ENCODE measurements at regions of chr2 and their contacts with region 1.

Region 1: DNA sequence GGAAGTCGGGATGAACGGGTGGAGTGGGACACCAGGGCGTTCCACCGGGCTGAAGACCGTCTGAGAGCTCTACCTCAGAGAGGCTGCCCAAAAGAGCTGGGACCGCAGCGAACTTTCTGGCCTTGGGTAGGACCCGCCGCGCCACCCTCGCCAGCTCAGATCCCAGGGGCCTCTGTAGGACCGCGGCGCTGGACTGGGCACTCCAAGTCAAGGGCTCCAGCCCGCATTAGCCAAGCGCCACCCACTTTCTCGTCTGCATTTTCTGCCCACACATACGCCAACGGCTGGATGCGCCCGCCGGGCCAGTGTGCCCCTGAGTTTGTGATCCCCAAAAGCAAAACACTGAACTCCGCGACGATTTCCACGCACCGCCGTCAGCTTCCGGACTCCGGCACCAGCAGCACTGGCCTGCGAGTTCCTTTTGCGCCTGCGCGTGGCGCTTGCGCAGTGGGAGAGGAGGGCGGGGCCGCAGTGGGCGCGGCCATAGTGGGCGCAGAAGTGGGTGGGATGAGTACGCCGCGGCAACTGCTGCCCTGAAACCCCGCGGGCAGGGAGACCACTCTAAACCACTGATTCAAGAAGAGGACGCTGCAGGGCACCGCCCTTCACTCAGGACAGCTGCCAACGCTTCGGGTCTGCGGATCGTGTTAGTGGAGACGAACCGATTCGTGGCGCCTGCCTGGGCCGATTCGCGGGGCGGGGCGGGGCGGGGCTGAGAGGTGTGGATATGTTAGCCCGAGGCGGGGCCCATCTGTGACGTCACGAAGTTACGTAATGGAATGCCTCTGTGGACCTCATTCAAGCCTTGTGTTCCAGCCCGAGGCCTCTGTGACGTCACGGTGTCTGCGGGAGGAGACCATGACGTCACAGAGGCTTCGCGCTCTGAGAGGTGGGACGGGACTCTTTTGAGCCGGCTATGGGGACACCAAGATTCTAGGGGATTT is 10.5 kb downstream of the OSR1 start:
- DNase-seq: peak; percentile 88 to 99 (median 92)
- H3K4me3 ChIP-seq: peak overlapping the region; percentile 59 to 98 (median 86)
- H3K27ac ChIP-seq: peak overlapping the region; percentile 56 to 97 (median 91)
- H3K27me3 ChIP-seq: peaks cover 0 to 36% (median 28%) of the 10 kb centered on the region in 45 donors
- CTCF ChIP-seq: peak in 37 of 56 donors; percentile 6 to 62 (median 34)

Region 2: DNA sequence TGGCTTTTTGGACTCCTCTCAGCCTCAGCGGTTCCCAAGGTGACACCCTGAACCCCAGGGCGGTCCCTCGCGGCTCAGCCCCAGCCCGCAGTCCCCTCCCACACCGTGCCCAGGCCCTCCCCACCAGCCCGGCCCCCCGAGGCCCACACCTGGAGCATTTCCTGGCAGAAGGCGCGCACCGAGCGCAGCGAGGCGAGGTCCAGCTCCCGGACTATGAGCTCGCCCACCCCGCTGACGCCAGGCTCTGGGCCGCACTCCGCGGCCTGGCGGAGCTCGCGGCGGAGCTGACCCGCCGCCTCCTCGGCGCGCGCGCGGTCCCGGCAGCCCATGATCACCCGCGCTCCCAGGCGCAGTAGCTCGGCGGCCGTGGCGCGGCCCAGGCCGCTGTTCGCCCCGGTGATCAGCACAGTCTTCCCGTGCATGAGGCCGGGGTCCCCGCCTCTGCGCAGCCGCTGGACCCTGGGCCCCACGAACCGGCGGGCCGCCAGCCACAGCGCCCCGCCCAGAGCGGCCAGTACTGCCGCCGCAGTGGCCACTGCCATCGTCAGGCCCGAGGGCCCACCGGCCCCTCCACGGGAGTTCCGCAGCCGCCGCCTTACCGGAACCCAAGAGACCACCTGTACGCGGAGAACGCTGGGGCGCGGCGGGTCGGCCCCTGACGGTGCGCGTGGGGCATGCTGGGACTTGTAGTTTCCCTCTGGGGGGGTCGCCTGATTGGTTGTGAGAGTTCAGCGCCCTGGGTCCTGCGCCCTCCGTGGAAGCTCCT is 787.7 kb before region 1 on chr2 and contains the start of gene RDH14:
- intact Hi-C with region 1: loop called in 1 of 2 experiments (anchors 5 kb)
- DNase-seq: peak; percentile 92 to 97 (median 96)
- H3K4me3 ChIP-seq: peak within 1 kb of the TSS; percentile 51 to 99 (median 83)
- H3K27ac ChIP-seq: peak within 1 kb of the TSS in 58 of 59 donors; percentile 61 to 97 (median 91)
- H3K27me3 ChIP-seq: no peaks in the 10 kb centered on the region
- CTCF ChIP-seq: peak in 31 of 56 donors; percentile 5 to 52 (median 29)
- total RNA-seq, gene RDH14: 10.3 to 25.2 (median 17.9) TPM

Region 3: GRCh38 chr2:18987592-18988073 is 360.3 kb before region 1 on chr2:
- intact Hi-C with region 1: loop called (anchors 5 kb)
- DNase-seq: peak in 7 of 10 donors; percentile 19 to 62 (median 40)
- H3K4me3 ChIP-seq: no peak overlapping the region
- H3K27ac ChIP-seq: no peak overlapping the region
- H3K27me3 ChIP-seq: no peaks in the 10 kb centered on the region
- CTCF ChIP-seq: peak in 50 of 56 donors; percentile 14 to 72 (median 43)

Region 4: GRCh38 chr2:19114754-19115231 is 233.1 kb before region 1 on chr2:
- intact Hi-C with region 1: loop called in 1 of 2 experiments (anchors 10 kb)
- DNase-seq: peak in 1 of 10 donors; percentile 82
- H3K4me3 ChIP-seq: no peak overlapping the region
- H3K27ac ChIP-seq: no peak overlapping the region
- H3K27me3 ChIP-seq: no peaks in the 10 kb centered on the region
- CTCF ChIP-seq: no peak

Region 5: DNA sequence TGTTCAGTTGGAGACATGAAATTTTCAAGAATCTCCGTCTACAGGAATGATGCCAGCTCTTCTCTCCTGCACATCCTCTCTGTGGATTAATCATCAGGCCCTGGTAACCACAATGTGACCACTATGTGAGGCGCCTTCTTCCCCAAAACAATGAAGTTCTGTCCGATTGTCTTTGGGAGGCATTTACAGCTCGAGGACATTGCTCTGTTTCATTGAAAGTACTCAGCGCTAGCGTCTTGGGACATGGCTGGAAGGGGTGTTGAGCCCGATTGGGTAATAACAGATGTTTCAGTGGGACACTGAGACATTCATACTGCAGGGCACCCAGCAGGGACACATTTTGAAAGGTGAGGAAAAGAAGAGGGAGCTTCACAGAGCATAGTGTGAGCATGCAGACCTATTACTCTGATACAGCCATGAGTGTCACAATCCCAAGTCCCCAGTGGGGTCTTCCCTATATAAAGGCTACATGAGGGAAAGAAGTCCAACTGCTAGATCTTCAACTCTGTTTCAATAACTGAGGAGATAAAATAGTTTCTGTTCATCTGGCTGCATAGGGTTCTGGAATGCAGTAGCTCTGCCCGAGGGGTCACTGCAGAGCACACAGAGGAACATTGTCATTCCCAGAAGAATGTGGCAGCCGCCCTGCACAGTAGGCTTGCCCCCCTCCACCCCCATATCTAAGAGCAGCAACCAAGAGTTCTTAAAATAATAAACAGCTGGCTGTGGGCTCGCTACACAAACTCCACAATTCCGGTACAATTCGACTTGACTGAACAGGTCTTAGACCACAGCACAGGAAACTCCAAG is 226.7 kb before region 1 on chr2:
- intact Hi-C with region 1: loop called (anchors 5 to 10 kb)
- DNase-seq: peak in 3 of 10 donors; percentile 47 to 60 (median 49)
- H3K4me3 ChIP-seq: peak overlapping the region in 3 of 59 donors; percentile 13 to 35 (median 20)
- H3K27ac ChIP-seq: peak overlapping the region in 57 of 59 donors; percentile 12 to 96 (median 83)
- H3K27me3 ChIP-seq: no peaks in the 10 kb centered on the region
- CTCF ChIP-seq: peak in 4 of 56 donors; percentile 7 to 32 (median 18)

Region 6: GRCh38 chr2:19392221-19392620 is 44.3 kb after region 1 on chr2:
- intact Hi-C with region 1: no loop called
- DNase-seq: no peak
- H3K4me3 ChIP-seq: no peak overlapping the region
- H3K27ac ChIP-seq: no peak overlapping the region
- H3K27me3 ChIP-seq: peaks cover 0 to 10% (median 0%) of the 10 kb centered on the region in 45 donors
- CTCF ChIP-seq: no peak

Region 7: DNA sequence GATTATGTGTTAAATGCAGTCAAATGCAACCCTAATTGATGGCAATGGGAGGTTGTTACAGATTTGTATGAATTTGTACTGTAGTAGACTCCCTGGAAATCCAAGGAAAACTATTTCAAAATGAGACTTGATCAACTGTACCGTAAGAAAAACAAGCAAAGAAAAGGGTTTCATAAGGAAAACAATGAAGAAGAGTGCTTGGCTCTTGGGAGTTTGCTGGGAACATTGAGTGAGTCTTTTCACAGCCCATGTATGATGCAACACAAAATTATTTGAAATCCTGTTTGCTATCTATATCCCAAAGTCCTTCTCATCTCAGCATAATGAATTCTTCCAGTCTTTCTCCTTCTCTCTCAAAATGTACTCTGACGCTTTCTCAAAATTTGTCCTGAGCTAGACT is 77.5 kb after region 1 on chr2:
- intact Hi-C with region 1: no loop called
- DNase-seq: no peak
- H3K4me3 ChIP-seq: no peak overlapping the region
- H3K27ac ChIP-seq: no peak overlapping the region
- H3K27me3 ChIP-seq: peaks cover 0 to 28% (median 0%) of the 10 kb centered on the region in 45 donors
- CTCF ChIP-seq: no peak

Region 8: GRCh38 chr2:19863303-19864041 is 515.6 kb after region 1 on chr2:
- intact Hi-C with region 1: loop called in 1 of 2 experiments (anchors 2 kb)
- DNase-seq: peak; percentile 57 to 84 (median 68)
- H3K4me3 ChIP-seq: peak overlapping the region in 45 of 59 donors; percentile 7 to 53 (median 34)
- H3K27ac ChIP-seq: no peak overlapping the region
- H3K27me3 ChIP-seq: peaks cover 0 to 12% (median under 1%) of the 10 kb centered on the region in 45 donors
- CTCF ChIP-seq: peak; percentile 86 to 99 (median 95)

Region 9: DNA sequence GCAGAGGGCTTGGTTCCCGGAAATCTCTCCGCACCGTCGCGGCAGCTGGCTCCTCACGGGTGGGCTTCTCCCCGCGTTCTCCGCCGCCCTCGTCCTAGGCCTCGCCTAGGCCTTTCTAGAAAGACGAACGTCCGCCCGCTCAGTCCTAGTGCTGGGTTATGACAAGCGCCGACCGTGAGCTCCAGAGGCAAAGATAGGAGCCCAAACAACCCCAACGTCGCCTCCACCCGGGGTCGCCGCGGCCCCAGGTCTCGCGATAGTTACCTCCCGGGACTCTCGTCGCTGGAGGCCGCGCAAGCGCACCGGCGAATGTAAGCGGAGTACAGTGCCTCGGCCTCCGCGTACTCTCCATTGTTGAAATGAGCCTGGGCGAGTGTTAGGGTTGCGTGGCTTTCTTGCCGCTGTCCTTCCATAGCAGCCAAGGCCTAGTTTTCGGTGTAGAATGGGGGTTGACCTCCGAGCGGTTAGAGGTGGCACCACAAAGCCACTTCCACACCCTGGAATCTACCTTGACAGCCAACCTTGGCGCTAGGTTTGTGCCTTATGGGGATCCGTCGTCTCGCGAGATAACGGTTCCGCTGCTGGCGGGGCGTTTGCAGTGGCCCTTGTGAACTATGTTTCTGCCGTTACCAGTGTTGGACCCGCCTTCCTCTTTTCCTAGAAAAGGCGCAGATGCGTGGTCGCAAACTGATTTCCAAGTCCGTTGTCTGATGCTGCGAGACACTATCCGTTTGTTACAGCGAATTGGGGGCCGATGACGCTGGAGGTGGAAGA is 553.7 kb after region 1 on chr2 and contains the start of gene TTC32:
- intact Hi-C with region 1: loop called in 1 of 2 experiments (anchors 10 kb)
- DNase-seq: peak; percentile 87 to 94 (median 92)
- H3K4me3 ChIP-seq: peak within 1 kb of the TSS; percentile 75 to 99 (median 90)
- H3K27ac ChIP-seq: peak within 1 kb of the TSS; percentile 85 to 100 (median 97)
- H3K27me3 ChIP-seq: no peaks in the 10 kb centered on the region
- CTCF ChIP-seq: peak in 36 of 56 donors; percentile 2 to 60 (median 30)
- total RNA-seq, gene TTC32: 8.8 to 38.7 (median 18.3) TPM